Activated CD4-positive, alpha-beta memory T cell treated with anti-CD3 and anti-CD28 coated beads, Interleukin-2, amount 10 ng/mL, durations not matched to agents 7 days and 5 days (primary cell): ENCODE measurements at regions of chr4 and their contacts with region 1.

Region 1: DNA sequence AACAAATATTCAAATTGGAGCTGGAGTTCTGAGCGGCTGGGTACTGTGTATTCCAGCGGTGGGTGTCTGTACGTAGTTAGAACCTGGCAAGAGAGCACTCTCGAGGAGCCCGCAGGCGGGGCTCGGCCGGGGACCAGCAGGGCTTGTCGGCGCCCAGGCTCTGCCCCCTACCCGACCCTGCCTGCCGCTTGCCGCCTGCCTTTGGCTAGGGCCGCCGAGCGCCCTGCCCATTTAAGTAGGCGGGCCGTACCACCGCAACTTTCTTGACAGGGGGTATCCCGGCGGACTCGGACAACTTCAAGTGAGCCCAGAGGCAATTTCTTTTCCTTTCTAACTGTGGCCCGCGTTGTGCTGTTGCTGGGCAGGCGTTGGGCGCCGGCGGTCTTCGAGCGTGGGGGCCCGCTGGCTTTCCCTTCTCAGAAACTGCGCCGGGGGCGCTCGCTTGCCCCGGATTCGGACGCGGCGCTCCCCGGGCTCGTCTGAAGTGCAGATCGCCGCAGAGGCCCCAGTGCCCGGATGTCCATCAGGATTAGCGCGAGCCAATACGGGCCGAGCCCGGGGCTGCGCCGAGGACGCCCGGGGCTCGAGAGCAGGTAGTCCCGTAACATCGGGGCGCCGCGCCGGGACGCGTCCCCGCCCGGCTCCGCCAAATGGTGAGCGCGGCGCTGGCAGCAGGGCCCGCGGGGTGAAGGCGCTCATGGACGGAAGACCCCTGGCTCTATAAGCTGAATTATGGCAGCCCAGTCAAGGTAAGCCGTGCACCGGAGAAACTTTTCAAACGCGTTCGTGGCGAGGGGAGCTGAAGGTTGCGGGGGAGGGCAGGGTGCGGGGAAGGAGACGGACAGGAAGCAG is 72.1 kb downstream of the AFF1 start:
- DNase-seq: peak; percentile 92
- H3K4me3 Mint-ChIP-seq: peak overlapping the region; percentile 95
- H3K27ac Mint-ChIP-seq: peak overlapping the region; percentile 98
- H3K4me1 Mint-ChIP-seq: peaks cover 48% of the 10 kb centered on the region
- H3K27me3 Mint-ChIP-seq: no peaks in the 10 kb centered on the region

Region 2: DNA sequence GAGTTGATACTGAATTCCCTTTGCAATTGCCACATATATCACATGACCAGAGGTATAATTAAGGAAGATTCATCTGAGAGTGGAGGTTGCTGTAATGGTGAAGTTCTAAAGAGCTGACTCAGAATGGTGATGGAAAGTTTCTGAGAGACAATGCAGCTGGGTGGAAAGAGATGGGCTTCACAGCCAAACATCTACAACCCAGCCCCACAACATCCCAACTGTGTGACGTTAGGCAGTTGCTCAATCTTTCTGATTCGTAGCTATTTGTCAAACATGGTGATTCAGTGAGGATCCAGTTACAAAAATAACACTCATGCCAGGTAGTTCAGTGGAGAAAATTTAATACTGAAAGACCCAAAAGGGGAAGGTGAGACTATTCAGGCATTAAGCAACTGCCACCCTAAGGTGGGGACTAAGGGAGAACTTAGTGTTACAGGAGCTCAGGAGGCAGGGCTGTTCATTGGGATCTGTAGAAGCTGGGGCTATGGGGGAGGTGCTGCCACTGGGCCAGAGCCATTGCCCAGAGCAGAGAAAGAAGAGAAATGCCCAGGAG is 79.0 kb before region 1 on chr4:
- CTCF ChIA-PET with region 1: interaction called, 44 read pairs
- POLR2A ChIA-PET with region 1: interaction called, 396 read pairs
- DNase-seq: no peak
- H3K4me3 Mint-ChIP-seq: no peak overlapping the region
- H3K27ac Mint-ChIP-seq: no peak overlapping the region
- H3K4me1 Mint-ChIP-seq: peaks cover 5% of the 10 kb centered on the region
- H3K27me3 Mint-ChIP-seq: no peaks in the 10 kb centered on the region

Region 3: DNA sequence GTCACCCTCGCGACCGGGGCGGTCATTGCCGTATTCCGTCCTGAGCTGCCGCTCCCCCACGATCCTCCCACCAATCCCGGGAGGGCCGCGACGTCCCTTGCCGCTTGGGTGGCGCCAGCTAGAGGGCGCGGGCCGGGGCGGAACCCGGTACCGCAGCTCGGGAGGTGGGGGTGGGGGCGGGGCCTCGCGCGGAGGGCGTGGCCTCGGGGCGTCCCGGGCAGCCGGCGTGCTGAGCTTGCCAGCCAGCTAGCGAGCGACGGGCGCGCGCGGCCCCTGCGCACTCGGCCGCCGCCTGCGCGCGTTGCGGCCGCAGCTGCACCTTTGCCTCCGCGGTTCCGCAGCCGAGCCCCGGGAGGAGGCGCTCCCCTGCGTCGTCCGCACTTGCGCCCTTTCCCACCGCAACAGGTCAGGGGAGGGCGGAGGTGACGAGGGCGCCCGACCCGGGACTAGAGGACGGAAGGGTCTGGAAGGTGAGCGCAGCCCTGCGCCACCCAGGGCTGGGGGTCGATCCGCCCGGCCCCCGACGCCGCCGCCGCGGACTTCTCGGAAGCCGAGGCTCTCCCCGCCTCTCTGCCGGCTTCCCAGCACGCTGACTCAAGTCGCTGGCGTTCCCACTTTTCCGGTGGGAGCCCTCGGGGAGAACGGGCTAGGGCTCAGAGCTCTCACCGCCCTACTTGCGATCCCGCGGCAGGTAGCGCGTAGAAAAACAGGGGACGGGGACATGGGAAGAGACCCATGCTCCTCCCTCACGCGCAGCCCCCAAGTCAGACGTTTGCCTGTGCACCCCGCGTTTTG is 71.9 kb before region 1 on chr4 and contains the start of gene AFF1:
- CTCF ChIA-PET with region 1: interaction called, 107 read pairs
- POLR2A ChIA-PET with region 1: interaction called, 396 read pairs
- DNase-seq: peak; percentile 91
- H3K4me3 Mint-ChIP-seq: peak within 1 kb of the TSS; percentile 83
- H3K27ac Mint-ChIP-seq: peak within 1 kb of the TSS; percentile 95
- H3K4me1 Mint-ChIP-seq: peaks cover 48% of the 10 kb centered on the region
- H3K27me3 Mint-ChIP-seq: no peaks in the 10 kb centered on the region
- total RNA-seq, gene AFF1: 68.8 to 72.0 TPM

Region 4: GRCh38 chr4:86977621-86978184 is 29.2 kb before region 1 on chr4:
- CTCF ChIA-PET with region 1: interaction called, 3 read pairs
- POLR2A ChIA-PET with region 1: interaction called, 16 read pairs
- DNase-seq: peak; percentile 21
- H3K4me3 Mint-ChIP-seq: no peak overlapping the region
- H3K27ac Mint-ChIP-seq: no peak overlapping the region
- H3K4me1 Mint-ChIP-seq: peaks cover 49% of the 10 kb centered on the region
- H3K27me3 Mint-ChIP-seq: no peaks in the 10 kb centered on the region

Region 5: DNA sequence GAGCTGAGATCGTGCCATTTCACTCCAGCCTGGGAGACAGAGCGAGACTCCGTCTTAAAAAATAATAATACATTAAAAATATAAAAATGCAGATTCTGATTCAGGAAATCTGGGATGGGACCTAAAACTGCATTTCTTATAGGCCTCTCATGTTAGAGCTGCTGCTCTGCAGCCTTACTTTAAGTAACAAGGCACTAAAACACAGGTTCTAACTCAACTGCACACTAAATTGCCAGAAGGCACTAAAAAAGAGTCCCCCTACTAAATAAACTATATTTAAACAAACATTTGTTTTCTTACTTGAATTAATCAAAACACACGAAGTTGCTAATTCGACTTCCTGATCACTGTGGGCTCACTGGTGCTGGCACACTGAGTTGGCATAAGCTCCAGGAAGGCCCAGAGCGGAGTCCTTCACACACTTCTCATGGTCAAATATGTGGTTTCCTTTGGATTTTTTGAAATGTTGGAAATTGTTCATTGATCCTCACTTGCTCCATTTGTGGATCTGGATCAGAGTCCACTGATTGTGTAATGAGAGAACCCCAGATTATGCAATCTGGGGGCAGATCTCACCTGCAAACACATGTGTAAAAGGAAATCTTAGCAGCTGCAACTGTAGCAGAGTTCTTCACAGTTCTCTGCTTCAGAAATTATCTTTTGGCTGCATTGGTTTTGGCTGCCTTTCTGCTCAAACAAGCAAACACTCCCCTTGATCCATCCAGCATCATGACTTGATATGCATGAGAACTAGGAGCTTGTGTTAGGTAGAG is 12.8 kb before region 1 on chr4:
- CTCF ChIA-PET with region 1: interaction called, 3 read pairs
- POLR2A ChIA-PET with region 1: interaction called, 15 read pairs
- DNase-seq: no peak
- H3K4me3 Mint-ChIP-seq: no peak overlapping the region
- H3K27ac Mint-ChIP-seq: no peak overlapping the region
- H3K4me1 Mint-ChIP-seq: no peaks in the 10 kb centered on the region
- H3K27me3 Mint-ChIP-seq: no peaks in the 10 kb centered on the region

Region 6: GRCh38 chr4:87093443-87094123 is 86.7 kb after region 1 on chr4:
- CTCF ChIA-PET with region 1: interaction called, 7 read pairs
- POLR2A ChIA-PET with region 1: interaction called, 43 read pairs
- DNase-seq: peak; percentile 29
- H3K4me3 Mint-ChIP-seq: no peak overlapping the region
- H3K27ac Mint-ChIP-seq: no peak overlapping the region
- H3K4me1 Mint-ChIP-seq: peaks cover 18% of the 10 kb centered on the region
- H3K27me3 Mint-ChIP-seq: no peaks in the 10 kb centered on the region

Region 7: DNA sequence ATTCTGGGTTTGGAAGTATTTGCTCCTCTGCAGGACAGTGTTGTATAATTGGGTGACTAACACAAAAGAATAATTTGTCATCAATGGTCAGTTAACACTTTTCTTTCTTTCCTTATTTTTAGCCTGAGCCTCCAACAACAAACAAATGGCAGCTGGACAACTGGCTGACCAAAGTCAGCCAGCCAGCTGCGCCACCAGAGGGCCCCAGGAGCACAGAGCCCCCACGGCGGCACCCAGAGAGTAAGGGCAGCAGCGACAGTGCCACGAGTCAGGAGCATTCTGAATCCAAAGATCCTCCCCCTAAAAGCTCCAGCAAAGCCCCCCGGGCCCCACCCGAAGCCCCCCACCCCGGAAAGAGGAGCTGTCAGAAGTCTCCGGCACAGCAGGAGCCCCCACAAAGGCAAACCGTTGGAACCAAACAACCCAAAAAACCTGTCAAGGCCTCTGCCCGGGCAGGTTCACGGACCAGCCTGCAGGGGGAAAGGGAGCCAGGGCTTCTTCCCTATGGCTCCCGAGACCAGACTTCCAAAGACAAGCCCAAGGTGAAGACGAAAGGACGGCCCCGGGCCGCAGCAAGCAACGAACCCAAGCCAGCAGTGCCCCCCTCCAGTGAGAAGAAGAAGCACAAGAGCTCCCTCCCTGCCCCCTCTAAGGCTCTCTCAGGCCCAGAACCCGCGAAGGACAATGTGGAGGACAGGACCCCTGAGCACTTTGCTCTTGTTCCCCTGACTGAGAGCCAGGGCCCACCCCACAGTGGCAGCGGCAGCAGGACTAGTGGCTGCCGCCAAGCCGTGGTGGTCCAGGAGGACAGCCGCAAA is 107.6 kb after region 1 on chr4:
- CTCF ChIA-PET with region 1: no interaction called
- POLR2A ChIA-PET with region 1: no interaction called
- DNase-seq: no peak
- H3K4me3 Mint-ChIP-seq: no peak overlapping the region
- H3K27ac Mint-ChIP-seq: no peak overlapping the region
- H3K4me1 Mint-ChIP-seq: peaks cover 13% of the 10 kb centered on the region
- H3K27me3 Mint-ChIP-seq: no peaks in the 10 kb centered on the region

Region 8: DNA sequence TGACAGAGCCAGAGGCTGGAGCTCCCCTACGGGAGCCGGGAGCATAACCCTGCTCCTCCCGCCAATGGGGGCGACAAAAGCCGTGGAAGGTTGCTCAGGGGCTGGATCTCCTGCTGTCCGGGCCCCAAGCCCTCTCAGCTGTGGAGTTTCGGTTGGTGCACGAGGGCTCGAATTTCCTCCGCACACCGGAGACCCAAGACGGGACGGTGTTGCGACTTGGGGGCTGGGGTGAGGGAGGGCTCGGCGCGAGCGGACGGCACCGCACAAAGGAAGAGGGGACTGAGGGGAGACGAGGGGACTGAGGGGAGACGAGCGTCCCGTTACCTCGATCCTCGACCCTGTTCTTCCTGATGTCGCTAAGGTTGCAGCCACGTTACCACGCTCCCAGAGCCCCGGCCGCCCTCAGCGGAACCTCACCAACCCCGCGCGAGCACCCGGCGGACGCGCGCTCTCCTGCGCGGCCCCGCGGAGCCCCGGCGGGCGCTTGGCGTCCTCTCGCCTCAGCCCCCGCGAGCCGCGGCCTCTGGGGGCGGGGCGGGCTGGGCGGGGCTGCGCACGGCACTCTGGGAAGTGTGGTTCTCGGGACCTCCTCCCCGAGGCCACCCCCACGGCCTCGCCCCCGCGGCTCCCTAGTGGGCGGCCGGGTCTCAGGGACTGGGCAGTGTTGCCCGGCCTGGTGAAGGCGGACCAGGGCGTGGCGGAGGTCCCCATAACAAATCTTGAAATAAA is 213.4 kb after region 1 on chr4 and contains the start of gene KLHL8:
- CTCF ChIA-PET with region 1: no interaction called
- POLR2A ChIA-PET with region 1: interaction called, 27 read pairs
- DNase-seq: peak; percentile 90
- H3K4me3 Mint-ChIP-seq: peak within 1 kb of the TSS; percentile 85
- H3K27ac Mint-ChIP-seq: peak within 1 kb of the TSS; percentile 85
- H3K4me1 Mint-ChIP-seq: peaks cover 16% of the 10 kb centered on the region
- H3K27me3 Mint-ChIP-seq: peaks cover 3% of the 10 kb centered on the region
- total RNA-seq, gene KLHL8: 9.1 to 9.8 TPM